ENCODE measurements at regions of chr1 and their contacts with region 1.

Region 1: GRCh38 chr1:174262349-174263241 is 103.3 kb downstream of the RABGAP1L start:
- DNase-seq: peak; percentile 34
- H3K4me3 ChIP-seq: no peak overlapping the region
- H3K27ac ChIP-seq: no peak overlapping the region
- H3K27me3 ChIP-seq: no peaks in the 10 kb centered on the region
- CTCF ChIP-seq: peak; percentile 89

Region 2: GRCh38 chr1:174074757-174075156 is 187.8 kb before region 1 on chr1:
- CTCF ChIA-PET with region 1: no interaction called
- POLR2A ChIA-PET with region 1: no interaction called
- DNase-seq: peak; percentile 2
- H3K4me3 ChIP-seq: no peak overlapping the region
- H3K27ac ChIP-seq: no peak overlapping the region
- H3K27me3 ChIP-seq: no peaks in the 10 kb centered on the region
- CTCF ChIP-seq: peak; percentile 60

Region 3: DNA sequence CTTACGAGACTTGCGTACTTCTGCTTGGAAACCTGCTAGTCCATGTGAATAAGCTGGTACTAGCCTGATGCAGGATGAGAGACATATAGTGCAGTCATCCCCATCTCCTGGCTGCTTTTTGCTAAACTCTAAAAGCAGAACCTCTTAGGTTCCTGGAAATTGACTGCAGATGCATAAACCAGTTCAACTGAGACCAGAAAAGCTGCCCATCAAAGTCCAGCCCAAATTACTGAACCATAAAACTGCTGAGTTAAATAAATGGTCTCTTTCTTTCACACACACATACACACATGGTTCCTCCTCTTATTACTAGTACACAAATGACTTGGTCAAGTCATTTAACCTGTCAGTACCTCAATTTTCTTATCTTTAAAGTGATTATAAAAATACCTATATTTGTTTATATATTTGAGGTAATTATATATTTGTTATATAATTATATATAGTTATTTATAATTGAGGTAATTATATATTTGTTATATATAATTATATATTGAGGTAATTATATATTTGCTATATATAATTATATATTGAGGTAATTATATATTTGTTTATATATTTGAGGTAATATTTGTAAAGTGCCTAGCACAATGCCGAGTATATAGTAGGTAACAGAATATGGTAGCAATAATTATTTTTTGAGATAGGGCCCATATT is 128.5 kb before region 1 on chr1:
- CTCF ChIA-PET with region 1: no interaction called
- POLR2A ChIA-PET with region 1: no interaction called
- DNase-seq: no peak
- H3K4me3 ChIP-seq: no peak overlapping the region
- H3K27ac ChIP-seq: no peak overlapping the region
- H3K27me3 ChIP-seq: no peaks in the 10 kb centered on the region
- CTCF ChIP-seq: no peak

Region 4: DNA sequence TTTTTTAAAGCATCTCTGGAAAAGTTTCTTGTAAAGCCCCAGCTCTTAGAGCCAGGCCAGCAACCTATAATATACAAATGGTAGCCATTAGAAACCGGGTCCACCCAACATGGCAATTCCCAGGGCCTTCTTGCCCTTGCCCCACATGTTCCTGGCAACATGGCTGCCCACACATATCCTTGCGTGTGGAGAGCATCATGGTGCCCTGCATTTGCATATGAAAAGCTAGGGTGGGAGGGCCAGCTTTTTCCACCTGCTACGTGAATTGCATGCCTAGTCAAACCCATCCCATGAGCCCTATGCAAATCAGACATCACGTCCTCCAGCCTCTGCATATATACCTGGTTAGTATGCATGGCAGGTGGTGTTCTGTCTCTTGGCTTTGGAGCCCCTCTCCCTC is 15.1 kb before region 1 on chr1:
- CTCF ChIA-PET with region 1: interaction called, 22 read pairs
- POLR2A ChIA-PET with region 1: no interaction called
- DNase-seq: no peak
- H3K4me3 ChIP-seq: no peak overlapping the region
- H3K27ac ChIP-seq: no peak overlapping the region
- H3K27me3 ChIP-seq: no peaks in the 10 kb centered on the region
- CTCF ChIP-seq: no peak

Region 5: GRCh38 chr1:174413632-174414031 is 151.0 kb after region 1 on chr1:
- CTCF ChIA-PET with region 1: interaction called, 11 read pairs
- POLR2A ChIA-PET with region 1: no interaction called
- DNase-seq: no peak
- H3K4me3 ChIP-seq: no peak overlapping the region
- H3K27ac ChIP-seq: no peak overlapping the region
- H3K27me3 ChIP-seq: no peaks in the 10 kb centered on the region
- CTCF ChIP-seq: peak; percentile 32

Region 6: GRCh38 chr1:174700775-174701174 is 438.2 kb after region 1 on chr1:
- CTCF ChIA-PET with region 1: interaction called, 13 read pairs
- POLR2A ChIA-PET with region 1: no interaction called
- DNase-seq: no peak
- H3K4me3 ChIP-seq: no peak overlapping the region
- H3K27ac ChIP-seq: no peak overlapping the region
- H3K27me3 ChIP-seq: no peaks in the 10 kb centered on the region
- CTCF ChIP-seq: no peak

Region 7: DNA sequence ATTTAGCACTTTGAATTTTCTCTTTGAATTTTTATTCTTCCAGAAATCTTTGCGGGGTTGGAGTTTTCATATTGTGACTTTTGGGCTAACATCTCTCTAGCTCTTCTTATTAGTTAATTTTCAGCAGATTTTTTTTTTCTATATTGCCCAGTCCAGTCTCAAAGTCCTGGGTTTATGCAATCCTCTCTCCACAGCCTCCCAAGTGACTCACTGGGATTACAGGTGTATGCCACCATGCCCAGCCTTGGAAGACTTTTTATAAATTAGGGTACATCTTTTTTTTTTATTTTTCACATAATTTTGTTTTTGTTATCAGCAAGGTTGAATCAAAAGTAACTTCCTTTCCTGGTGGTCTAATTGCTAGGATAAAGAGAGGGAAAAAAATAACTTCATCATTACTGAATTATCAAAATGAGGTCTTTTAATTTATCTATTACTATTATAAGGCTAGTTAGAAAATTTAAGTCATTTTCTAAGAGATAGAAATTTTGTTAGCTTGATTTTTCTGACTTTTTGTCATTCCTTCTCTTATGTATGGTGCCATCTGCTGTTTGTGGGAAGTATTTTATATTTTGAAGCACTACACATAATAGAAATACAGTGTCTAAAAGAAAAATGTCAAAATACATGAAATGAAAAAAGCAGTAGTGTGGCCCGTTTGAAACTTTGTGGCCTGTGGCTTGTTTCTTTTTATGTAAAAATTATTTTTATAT is 463.7 kb after region 1 on chr1:
- CTCF ChIA-PET with region 1: interaction called, 242 read pairs
- POLR2A ChIA-PET with region 1: no interaction called
- DNase-seq: peak; percentile 13
- H3K4me3 ChIP-seq: no peak overlapping the region
- H3K27ac ChIP-seq: no peak overlapping the region
- H3K27me3 ChIP-seq: no peaks in the 10 kb centered on the region
- CTCF ChIP-seq: peak; percentile 59

Region 8: DNA sequence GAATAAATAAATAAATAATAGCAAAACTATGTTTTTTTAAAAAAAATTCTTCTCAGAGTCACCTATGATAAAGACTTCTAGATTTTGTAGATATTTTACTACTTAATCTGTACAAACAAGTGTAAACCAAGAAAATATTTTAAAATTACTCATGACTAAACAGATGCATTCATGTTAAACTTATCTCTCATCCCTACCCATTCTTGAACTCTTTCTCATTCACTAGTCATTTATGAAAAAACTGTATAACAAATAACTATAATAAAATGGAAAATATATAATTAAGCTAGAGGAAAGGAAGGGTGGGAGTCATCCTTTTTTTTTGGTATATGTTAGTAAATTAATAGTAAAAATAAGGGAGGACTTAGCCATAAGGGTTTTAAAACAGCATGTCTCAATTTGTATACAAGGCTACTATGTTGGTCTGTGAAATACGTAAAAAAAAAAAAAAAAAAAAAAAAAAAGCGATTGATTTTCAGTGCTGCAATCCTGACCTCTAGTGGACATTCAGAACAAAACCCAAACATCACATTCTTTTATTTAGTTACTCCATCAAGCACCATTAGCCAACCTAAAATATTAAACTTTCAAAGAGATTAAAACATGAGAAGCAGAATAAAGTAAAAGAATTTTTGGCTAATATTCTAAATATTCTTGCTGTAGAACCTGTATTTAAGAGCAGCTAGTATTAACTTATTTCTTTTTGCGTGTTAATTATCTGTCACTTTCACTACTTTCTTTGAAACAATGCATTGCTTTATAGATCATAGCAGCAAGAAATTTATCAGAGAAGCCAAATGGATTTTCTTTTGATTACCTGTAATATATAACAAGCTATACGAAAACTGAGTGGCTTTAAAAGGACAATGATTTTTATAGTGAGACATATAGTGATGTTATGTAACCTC is 481.3 kb after region 1 on chr1:
- CTCF ChIA-PET with region 1: interaction called, 243 read pairs
- POLR2A ChIA-PET with region 1: interaction called, 7 read pairs
- DNase-seq: peak; percentile 33
- H3K4me3 ChIP-seq: no peak overlapping the region
- H3K27ac ChIP-seq: no peak overlapping the region
- H3K27me3 ChIP-seq: no peaks in the 10 kb centered on the region
- CTCF ChIP-seq: peak; percentile 67